GM10248 (cell line): ENCODE measurements at regions of chr7 and their contacts with region 1.

Region 1: DNA sequence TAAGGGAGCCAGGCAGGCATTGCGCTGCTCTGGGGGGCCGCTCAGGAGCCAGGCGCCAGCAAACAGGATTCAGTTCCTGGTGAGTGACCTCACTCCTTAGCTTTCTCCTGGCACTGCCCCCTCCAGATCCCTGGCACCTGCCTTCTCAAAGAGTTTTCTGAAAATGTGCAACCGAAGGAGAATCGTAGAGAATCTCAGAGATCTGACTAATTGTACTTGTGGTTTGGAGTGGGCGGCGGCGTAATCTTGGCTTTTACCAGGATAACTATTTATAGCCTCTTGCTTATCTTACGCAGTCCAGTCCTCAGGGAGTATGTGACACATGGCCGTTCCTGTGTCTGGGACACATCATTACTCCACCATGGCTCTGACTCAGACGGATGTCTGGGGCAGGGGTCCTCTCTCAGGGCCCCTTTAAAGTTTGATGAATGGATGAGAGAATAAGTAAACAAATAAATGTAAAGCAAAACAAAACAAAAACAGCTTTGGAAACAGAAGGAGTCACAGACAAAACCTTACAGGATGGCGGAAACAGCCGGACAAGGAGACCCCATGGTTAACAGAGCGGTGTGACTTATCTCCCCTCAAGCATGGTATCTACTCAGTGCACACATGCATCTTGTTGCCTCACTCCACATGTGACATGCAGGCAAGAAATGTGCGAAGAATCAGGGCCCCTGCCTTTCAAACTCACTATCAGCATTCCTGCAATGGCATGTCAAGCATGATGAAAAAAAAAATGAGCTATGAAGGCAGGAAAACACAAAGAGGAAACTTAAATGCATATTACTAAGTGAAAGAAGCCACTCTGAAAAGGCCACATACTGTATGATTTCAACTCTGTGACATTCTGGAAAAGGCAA is 99.7 kb downstream of the TNS3 start:
- DNase-seq: no peak
- CTCF ChIP-seq: no peak

Region 2: DNA sequence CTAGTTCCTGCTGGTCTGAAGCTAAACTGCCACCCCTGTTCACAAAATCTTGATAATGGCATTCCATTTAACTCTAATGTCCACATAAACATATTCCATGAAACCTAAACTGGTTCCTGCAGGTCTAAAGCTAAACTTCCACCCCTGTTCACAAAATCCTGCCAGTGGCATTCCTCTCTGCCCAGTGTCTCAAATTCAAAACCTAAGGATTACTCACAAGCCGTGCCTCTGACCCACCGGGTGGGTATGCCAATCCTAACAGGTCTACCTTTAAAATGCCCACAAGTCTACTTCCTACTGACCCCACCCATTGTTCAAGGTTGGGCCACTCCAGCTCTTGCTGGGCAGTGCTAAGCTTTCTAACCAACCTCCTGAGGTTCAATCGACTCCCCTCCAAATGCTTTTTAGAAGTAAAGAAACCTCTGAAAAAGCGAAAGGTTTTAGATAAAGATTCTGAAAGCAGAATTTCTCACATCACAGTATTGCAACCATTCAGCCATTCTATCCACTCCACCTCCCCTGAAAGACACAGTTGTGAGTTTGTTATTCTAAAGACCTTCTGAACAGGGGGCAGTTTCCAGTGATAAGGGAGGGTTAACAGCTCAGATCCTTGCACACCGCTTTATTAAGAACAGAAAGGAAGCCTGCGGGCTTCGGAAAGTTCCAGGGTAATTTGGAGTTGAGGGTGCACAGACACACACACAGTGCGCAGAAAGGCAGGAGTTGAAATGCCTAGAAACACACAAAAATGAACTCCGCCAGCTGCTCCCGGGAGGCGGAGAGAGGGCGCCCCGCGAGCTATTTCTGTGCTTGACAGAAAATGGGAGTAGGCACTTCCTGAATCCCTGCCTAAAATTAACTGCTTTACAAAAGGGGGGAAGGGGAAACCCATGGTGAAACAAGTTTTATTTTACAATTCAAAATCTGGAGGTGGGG is 12.0 kb after region 1 on chr7:
- CTCF ChIA-PET with region 1: interaction called, 12 read pairs
- POLR2A ChIA-PET with region 1: no interaction called
- DNase-seq: no peak
- CTCF ChIP-seq: no peak

Region 3: GRCh38 chr7:47520406-47520805 is 38.2 kb after region 1 on chr7:
- CTCF ChIA-PET with region 1: no interaction called
- POLR2A ChIA-PET with region 1: no interaction called
- DNase-seq: no peak
- CTCF ChIP-seq: no peak